Heart right ventricle (tissue), 16 donors: ENCODE measurements at regions of chr3 and their contacts with region 1.

Region 1: DNA sequence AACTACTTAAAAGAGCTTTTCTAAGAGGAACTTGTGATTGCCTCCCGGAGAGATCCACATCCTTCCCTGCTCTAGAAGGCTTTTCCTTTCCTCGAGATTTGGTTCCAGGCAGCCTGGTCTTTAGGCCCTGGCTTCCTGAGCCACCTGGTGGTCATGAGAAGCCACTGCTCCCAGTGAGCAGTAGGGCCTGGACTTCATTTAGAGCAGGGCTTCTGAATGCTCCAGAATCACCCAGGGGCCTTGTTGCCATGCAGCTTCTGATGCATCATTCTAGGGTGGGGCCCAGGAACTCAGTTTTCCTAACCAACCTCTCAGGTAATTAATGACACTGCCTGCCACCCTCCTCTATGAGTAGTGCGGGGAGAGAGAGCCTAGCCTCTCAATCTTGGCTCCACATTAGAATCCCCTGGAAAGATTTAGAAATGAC is 29.6 kb downstream of the PSMD6 start:
- DNase-seq: peak; percentile 47 to 59
- ATAC-seq: peak; percentile 75 to 92 (median 90)
- H3K4me3 ChIP-seq: no peak overlapping the region
- H3K27ac ChIP-seq: no peak overlapping the region
- H3K4me1 ChIP-seq: peaks cover 0 to 11% (median 6%) of the 10 kb centered on the region in 9 donors
- H3K27me3 ChIP-seq: no peaks in the 10 kb centered on the region
- CTCF ChIP-seq: peak; percentile 83 to 95 (median 91)

Region 2: DNA sequence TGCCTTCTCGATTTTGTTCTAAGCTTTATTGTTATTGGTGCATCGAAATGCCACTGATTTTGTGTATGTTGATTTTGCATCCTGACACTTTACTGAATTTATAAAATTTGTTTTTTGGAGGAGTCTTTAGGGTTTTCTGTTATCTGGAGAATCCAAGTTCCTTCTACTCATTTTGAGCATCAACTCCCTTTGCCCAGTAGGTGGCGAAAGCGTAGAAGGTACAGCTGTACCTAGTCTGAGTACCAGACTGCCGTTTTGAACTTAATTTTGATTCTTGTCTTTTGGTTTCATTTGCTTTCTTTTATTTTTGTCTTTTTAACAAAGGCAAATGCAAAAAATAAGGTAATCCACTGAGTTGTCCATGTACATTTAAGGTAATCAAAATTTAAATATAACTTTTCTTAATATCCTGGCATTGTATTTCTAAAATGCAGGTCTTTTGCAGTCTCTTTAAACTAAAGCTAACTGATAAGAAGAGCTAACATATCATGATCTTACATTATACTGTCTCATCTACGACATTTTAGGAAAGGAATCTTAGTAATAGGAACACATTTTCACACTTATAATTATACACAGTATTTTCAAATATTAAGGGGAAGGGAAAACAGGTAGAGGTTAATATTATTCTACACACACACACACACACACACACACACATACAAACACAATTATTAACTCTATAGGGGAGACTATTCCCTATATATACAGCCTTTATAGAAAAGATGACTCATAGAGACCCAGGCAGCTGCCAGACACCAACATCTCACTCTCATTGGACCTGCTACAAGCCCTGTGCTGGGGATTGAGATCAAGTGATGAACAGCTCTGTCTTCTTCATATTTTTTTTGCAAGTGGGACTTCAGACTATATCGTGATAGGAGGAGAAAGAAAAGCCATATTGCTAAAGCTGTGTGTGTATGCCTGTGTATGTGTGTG is 643.8 kb before region 1 on chr3:
- intact Hi-C with region 1: loop called in 7 of 10 experiments (anchors 5 to 10 kb)
- DNase-seq: peak in 1 of 2 donors; percentile 14
- ATAC-seq: peak in 1 of 8 donors; percentile 49
- H3K4me3 ChIP-seq: no peak overlapping the region
- H3K27ac ChIP-seq: no peak overlapping the region
- H3K4me1 ChIP-seq: peaks cover 0 to 3% (median 0%) of the 10 kb centered on the region in 9 donors
- H3K27me3 ChIP-seq: peaks cover 0 to 45% (median 22%) of the 10 kb centered on the region in 7 donors
- CTCF ChIP-seq: peak; percentile 34 to 80 (median 72)

Region 3: GRCh38 chr3:63557912-63558311 is 435.8 kb before region 1 on chr3:
- intact Hi-C with region 1: no loop called
- DNase-seq: no peak
- ATAC-seq: no peak
- H3K4me3 ChIP-seq: no peak overlapping the region
- H3K27ac ChIP-seq: no peak overlapping the region
- H3K4me1 ChIP-seq: no peaks in the 10 kb centered on the region
- H3K27me3 ChIP-seq: peaks cover 0 to under 1% (median 0%) of the 10 kb centered on the region in 7 donors
- CTCF ChIP-seq: no peak

Region 4: DNA sequence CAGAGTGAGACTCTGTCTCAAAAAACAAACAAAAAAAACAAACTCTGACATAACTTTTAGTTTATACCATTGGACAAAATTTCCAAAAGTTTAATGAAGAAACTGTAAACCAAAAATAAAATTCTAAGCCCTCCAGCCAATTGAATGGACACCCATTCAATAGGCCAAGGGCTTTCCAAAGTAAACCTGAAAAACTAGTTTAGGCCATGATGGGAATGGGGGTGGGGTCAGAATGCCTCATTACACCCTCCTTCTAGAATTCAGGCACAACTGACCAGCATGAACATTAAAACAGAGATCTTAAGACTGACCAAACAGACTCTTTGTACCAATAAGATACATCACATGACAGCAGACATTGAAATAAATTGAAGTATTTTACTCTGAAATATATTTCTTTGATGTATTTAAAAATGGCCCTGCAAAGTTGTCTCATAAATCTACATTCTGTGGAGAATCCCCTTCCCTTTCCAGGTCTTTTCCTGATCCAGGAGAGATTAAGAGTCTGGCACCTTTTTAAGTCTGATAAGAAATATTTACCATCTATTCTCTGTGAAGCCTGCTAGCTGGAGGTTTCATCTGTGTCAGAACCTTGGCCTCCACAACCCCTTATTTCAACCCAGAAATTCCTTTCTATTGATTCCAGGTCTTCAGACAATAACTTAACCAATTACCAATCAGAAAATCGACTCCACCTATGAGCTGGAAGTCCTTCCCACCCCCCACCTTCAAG is 145.8 kb before region 1 on chr3:
- intact Hi-C with region 1: loop called in 1 of 10 experiments (anchors 10 kb)
- DNase-seq: no peak
- ATAC-seq: no peak
- H3K4me3 ChIP-seq: no peak overlapping the region
- H3K27ac ChIP-seq: no peak overlapping the region
- H3K4me1 ChIP-seq: peaks cover 0 to 15% (median 0%) of the 10 kb centered on the region in 9 donors
- H3K27me3 ChIP-seq: no peaks in the 10 kb centered on the region
- CTCF ChIP-seq: no peak

Region 5: GRCh38 chr3:63863148-63864007 is 130.3 kb before region 1 on chr3 and contains the starts of genes ATXN7 and THOC7:
- intact Hi-C with region 1: loop called in 4 of 10 experiments (anchors 5 to 10 kb)
- DNase-seq: peak; percentile 74 to 78
- ATAC-seq: peak; percentile 68 to 90 (median 84)
- H3K4me3 ChIP-seq: peak within 1 kb of the TSS; percentile 74 to 100 (median 96)
- H3K27ac ChIP-seq: peak within 1 kb of the TSS; percentile 80 to 98 (median 92)
- H3K4me1 ChIP-seq: peaks cover 0 to 25% (median 19%) of the 10 kb centered on the region in 9 donors
- H3K27me3 ChIP-seq: no peaks in the 10 kb centered on the region
- CTCF ChIP-seq: no peak
- total RNA-seq, gene ATXN7: 13.3 to 31.0 (median 22.4) TPM
- total RNA-seq, gene THOC7: 71.3 to 97.8 (median 79.4) TPM

Region 6: GRCh38 chr3:63911873-63912767 is 81.5 kb before region 1 on chr3 and contains the start of gene SCAANT1:
- intact Hi-C with region 1: loop called in 7 of 10 experiments (anchors 5 to 10 kb)
- DNase-seq: peak; percentile 92 to 93
- ATAC-seq: peak; percentile 92 to 95 (median 94)
- H3K4me3 ChIP-seq: peak within 1 kb of the TSS; percentile 66 to 97 (median 73)
- H3K27ac ChIP-seq: peak within 1 kb of the TSS; percentile 90 to 100 (median 98)
- H3K4me1 ChIP-seq: peaks cover 4 to 49% (median 38%) of the 10 kb centered on the region in 9 donors
- H3K27me3 ChIP-seq: no peaks in the 10 kb centered on the region
- CTCF ChIP-seq: peak in 3 of 9 donors; percentile 10 to 45 (median 22)
- total RNA-seq, gene SCAANT1: not detected

Region 7: GRCh38 chr3:63945558-63946096 is 48.0 kb before region 1 on chr3:
- intact Hi-C with region 1: no loop called
- DNase-seq: no peak
- ATAC-seq: peak in 6 of 8 donors; percentile 48 to 85 (median 60)
- H3K4me3 ChIP-seq: no peak overlapping the region
- H3K27ac ChIP-seq: peak overlapping the region in 2 of 10 donors; percentile 8 to 29
- H3K4me1 ChIP-seq: peaks cover 0 to 46% (median 20%) of the 10 kb centered on the region in 9 donors
- H3K27me3 ChIP-seq: no peaks in the 10 kb centered on the region
- CTCF ChIP-seq: no peak

Region 8: GRCh38 chr3:63955830-63956545 is 37.7 kb before region 1 on chr3:
- intact Hi-C with region 1: loop called in 4 of 10 experiments (anchors 5 kb)
- DNase-seq: no peak
- ATAC-seq: no peak
- H3K4me3 ChIP-seq: no peak overlapping the region
- H3K27ac ChIP-seq: no peak overlapping the region
- H3K4me1 ChIP-seq: peaks cover 0 to 45% (median 40%) of the 10 kb centered on the region in 9 donors
- H3K27me3 ChIP-seq: no peaks in the 10 kb centered on the region
- CTCF ChIP-seq: no peak

Region 9: GRCh38 chr3:63961891-63962290 is 31.8 kb before region 1 on chr3:
- intact Hi-C with region 1: loop called in 4 of 10 experiments (anchors 5 kb)
- DNase-seq: no peak
- ATAC-seq: peak in 2 of 8 donors; percentile 47 to 55
- H3K4me3 ChIP-seq: no peak overlapping the region
- H3K27ac ChIP-seq: no peak overlapping the region
- H3K4me1 ChIP-seq: peaks cover 0 to 60% (median 44%) of the 10 kb centered on the region in 9 donors
- H3K27me3 ChIP-seq: no peaks in the 10 kb centered on the region
- CTCF ChIP-seq: peak; percentile 46 to 72 (median 60)